Left cardiac atrium (tissue), 4 donors: ENCODE measurements at regions of chr5 and their contacts with region 1.

Region 1: DNA sequence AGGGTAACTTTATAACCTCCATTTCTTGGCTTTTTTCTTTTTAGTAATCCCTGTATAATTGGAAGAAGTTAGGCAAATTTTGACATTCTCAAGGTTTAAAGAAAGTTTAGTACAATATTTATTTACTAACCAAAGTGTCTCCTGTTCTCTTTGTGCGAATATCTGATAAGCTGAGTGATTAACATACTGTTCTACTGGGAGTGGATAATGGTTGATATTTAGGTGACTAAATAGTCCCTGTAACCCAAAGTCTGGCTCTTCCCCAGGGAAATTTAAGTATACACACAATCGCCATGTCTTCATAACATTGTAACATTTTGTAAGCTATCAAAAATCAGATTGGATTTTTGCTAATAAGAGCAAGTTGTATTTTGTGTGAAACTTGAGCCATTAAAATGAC is 40.0 kb downstream of the CCNH start:
- DNase-seq: no peak
- ATAC-seq: no peak

Region 2: DNA sequence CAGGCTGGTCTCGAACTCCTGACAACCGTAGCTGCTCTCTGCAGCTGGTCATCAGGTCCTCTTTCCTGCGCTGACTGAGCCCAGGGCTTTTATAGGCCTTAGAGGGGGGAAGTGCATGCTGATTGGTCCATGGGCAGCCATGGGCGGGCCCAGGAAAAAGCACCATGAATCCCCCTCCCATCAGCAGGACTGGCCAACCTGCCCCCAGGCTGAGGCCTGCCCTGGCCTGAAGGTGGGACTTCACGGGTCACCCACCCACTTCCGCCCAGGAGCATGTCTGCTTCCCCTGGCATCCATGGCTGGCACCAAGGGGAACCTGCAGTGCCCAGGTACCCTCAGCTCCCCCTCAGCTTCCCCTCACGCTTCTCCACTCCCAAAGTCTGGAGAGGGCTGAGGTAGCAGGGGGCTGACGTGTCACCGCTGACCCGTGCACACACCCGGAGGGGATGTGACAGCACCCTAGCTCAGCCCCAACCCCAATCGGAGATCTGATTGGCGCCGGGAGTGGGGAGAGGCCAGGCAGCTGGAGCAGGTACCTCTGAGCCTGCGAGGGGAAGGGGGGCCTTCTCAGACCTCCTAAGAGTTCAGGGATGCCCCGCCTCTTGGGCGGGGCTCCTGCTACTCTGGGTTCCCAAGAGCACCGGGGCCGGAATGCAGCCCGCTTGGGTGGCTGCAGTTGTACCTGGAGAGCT is 121.0 kb before region 1 on chr5:
- intact Hi-C with region 1: no loop called
- DNase-seq: no peak
- ATAC-seq: no peak

Region 3: DNA sequence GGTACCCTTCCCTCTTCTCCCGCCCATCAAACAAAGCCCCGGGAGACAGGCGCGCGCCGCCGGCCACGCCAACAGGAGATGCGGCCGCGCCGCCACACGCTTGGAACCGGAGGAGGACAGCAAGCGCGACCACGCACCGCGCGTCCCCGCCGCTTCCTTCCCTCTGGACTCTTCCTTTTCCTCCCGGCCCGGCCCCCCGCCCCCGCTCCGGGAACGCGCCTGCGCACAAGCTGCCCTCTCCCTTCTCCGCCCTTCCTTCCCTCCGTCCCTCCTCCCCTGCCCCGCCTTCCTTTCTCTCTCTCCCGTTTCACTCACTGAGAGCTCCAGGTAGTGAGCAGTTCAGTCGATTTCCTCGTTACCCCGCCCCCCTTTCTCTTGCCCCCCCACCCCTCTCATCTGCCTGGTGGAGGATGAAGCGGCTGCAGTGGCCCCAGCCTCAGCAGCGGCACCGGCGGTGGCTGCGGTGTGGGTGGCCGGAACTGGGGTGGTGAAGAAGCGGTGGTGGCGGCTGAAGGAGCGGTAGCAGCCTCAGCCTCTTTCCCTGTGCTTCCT is 105.1 kb before region 1 on chr5 and contains the start of gene RASA1:
- intact Hi-C with region 1: loop called in 1 of 2 experiments (anchors 10 kb)
- DNase-seq: peak; percentile 94
- ATAC-seq: peak; percentile 97 to 98
- total RNA-seq, gene RASA1: 17.6 to 19.8 TPM